Dendritic cell treated with granulocyte-macrophage colony-stimulating factor and Interleukin-4, amounts not matched to agents 40 ng/mL and 50 ng/mL, for 4 days (primary cell): ENCODE measurements at regions of chr1 and their contacts with region 1.

Region 1: DNA sequence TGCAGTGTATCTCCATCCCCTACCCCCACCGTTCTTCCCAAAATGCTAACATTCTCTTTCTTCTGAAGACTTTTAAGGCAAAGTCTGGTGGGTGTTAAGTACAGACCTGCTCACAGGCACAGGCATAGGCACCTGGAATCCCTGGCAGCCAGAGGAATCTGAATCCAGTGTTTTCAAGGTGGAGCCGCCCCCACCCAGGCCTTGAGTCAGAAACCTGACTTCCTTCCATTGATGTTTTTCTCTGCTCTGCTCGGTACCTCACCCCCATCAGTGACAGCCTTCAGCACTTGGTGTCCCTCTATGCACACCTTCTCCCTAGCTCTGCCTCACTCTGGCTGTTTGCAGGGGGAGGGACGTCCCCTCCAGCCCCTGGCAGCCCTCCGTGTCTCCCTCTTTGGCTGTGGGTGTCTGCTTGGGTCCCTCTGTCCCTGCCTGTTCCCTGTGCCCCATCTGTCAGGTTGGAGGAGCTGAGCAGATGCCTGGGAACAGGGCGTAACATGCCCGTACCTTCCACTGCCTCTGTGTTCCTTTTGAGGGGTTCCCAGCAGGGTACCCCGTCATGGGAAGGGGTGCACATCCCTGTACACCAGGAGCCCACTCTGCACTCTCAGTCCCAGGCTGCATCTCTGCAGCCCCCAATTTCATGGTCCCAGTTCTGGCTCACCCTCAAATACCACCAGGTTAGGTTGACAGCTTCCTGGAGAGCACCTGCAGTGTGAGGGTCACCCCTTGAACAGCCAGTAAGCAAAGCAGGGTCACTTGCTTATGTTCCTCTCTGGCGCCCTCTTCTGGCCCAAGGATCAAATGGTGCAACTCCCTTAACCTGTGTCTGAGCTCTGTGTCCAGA is 6.7 kb downstream of the NCDN start:
- H3K4me3 Mint-ChIP-seq: no peak overlapping the region
- H3K27ac Mint-ChIP-seq: no peak overlapping the region
- H3K4me1 Mint-ChIP-seq: peaks cover 40% of the 10 kb centered on the region
- H3K27me3 Mint-ChIP-seq: no peaks in the 10 kb centered on the region

Region 2: DNA sequence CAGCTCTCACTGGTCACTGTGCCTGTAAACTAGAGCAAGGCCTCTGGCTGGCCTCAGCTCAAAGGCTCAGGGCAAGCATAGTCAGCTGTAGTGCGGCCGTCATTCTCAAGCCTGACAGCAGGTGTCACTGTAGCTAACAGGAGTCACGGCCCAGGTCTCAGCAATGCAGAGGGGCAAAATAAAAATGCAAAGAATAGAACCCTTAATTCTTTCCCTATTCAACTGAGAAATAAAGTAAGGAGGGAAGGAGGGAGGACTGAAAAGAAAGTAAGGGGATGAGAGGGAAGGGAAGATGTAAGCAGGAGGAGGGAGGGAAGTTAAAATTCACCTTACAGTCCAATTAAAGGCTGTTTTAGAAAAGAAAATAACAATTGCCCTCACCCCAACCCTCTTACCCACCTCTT is 113.1 kb before region 1 on chr1:
- intact Hi-C with region 1: loop called (anchors 2 kb)
- H3K4me3 Mint-ChIP-seq: no peak overlapping the region
- H3K27ac Mint-ChIP-seq: no peak overlapping the region
- H3K4me1 Mint-ChIP-seq: peaks cover 51% of the 10 kb centered on the region
- H3K27me3 Mint-ChIP-seq: no peaks in the 10 kb centered on the region

Region 3: GRCh38 chr1:35524106-35524505 is 40.2 kb before region 1 on chr1:
- intact Hi-C with region 1: no loop called
- H3K4me3 Mint-ChIP-seq: no peak overlapping the region
- H3K27ac Mint-ChIP-seq: no peak overlapping the region
- H3K4me1 Mint-ChIP-seq: no peaks in the 10 kb centered on the region
- H3K27me3 Mint-ChIP-seq: no peaks in the 10 kb centered on the region

Region 4: GRCh38 chr1:35726450-35727433 is 162.5 kb after region 1 on chr1:
- intact Hi-C with region 1: loop called (anchors 1 kb)
- H3K4me3 Mint-ChIP-seq: no peak overlapping the region
- H3K27ac Mint-ChIP-seq: no peak overlapping the region
- H3K4me1 Mint-ChIP-seq: peaks cover 9% of the 10 kb centered on the region
- H3K27me3 Mint-ChIP-seq: no peaks in the 10 kb centered on the region

Region 5: DNA sequence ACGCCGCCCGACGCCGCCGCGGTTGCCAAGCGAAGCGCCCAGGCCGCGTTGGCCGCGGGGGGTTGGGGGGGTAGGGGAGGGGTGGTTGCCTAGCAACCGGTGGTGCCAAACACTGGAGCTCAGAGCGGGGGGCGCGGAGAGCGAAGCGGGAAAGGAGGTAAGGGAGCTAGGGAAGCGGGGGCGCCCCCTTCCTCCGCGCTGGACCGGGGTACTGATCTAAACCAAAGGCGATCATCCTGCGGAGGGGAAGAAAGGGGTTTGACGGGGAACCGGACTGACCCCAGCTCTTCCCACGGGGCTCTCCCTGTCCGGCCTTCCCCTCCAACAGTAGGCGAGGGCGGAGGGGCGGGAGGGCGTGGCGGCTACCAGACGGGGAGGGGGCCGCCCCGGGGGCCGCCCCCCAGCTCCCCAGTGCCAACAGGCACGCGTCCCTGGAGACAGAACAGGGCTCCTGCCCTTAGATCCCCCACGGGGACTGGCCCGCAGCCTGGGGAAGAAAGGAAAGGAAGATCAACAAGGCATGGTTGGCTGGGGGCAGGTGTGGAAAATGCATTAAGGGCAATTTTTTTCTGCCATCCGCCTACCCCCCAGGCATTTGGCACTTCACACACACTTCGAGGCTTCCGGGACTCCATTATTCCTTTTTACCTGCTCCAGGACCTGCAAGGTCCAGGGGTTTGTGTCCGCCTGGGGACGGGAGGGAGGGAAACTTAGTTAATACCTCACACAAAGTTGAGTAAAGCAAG is 519.9 kb after region 1 on chr1 and contains the start of gene TEKT2:
- intact Hi-C with region 1: no loop called
- H3K4me3 Mint-ChIP-seq: peak within 1 kb of the TSS; percentile 71
- H3K27ac Mint-ChIP-seq: peak within 1 kb of the TSS; percentile 34
- H3K4me1 Mint-ChIP-seq: no peaks in the 10 kb centered on the region
- H3K27me3 Mint-ChIP-seq: peaks cover 30% of the 10 kb centered on the region